ENCODE measurements at regions of chr1 and their contacts with region 1.

Region 1: GRCh38 chr1:62746085-62746808 is 37.7 kb upstream of the ATG4C start:
- DNase-seq: no peak
- H3K4me3 Mint-ChIP-seq: no peak overlapping the region
- H3K27ac Mint-ChIP-seq: no peak overlapping the region
- H3K4me1 Mint-ChIP-seq: no peaks in the 10 kb centered on the region
- H3K27me3 Mint-ChIP-seq: peaks cover 22% of the 10 kb centered on the region

Region 2: GRCh38 chr1:62175568-62176179 is 570.6 kb before region 1 on chr1:
- CTCF ChIA-PET with region 1: interaction called, 13 read pairs
- POLR2A ChIA-PET with region 1: no interaction called
- DNase-seq: peak; percentile 28
- H3K4me3 Mint-ChIP-seq: no peak overlapping the region
- H3K27ac Mint-ChIP-seq: no peak overlapping the region
- H3K4me1 Mint-ChIP-seq: no peaks in the 10 kb centered on the region
- H3K27me3 Mint-ChIP-seq: peaks cover 3% of the 10 kb centered on the region

Region 3: DNA sequence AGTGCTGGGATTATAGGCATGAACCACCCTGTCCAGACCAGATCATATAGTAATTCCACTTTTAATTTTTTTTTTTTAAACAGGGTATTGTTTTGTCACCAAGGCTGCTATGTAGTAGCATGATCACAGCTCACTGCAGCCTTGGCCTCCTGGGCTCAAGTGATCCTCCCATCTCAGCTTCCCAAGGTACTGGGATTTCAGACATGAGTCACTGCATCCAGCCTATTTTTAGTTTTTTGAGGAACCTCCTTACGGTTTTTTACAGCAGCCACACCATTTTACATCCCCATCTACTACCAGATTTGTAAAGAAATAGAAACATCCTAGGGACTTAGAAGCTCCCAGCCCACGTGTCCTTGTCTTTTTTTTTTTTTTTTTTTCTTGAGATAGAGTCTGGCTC is 527.6 kb before region 1 on chr1:
- CTCF ChIA-PET with region 1: no interaction called
- POLR2A ChIA-PET with region 1: no interaction called
- DNase-seq: no peak
- H3K4me3 Mint-ChIP-seq: no peak overlapping the region
- H3K27ac Mint-ChIP-seq: no peak overlapping the region
- H3K4me1 Mint-ChIP-seq: no peaks in the 10 kb centered on the region
- H3K27me3 Mint-ChIP-seq: no peaks in the 10 kb centered on the region

Region 4: GRCh38 chr1:62508187-62508758 is 238.0 kb before region 1 on chr1:
- CTCF ChIA-PET with region 1: interaction called, 41 read pairs
- POLR2A ChIA-PET with region 1: no interaction called
- DNase-seq: no peak
- H3K4me3 Mint-ChIP-seq: no peak overlapping the region
- H3K27ac Mint-ChIP-seq: no peak overlapping the region
- H3K4me1 Mint-ChIP-seq: no peaks in the 10 kb centered on the region
- H3K27me3 Mint-ChIP-seq: no peaks in the 10 kb centered on the region

Region 5: GRCh38 chr1:62814786-62815185 is 68.5 kb after region 1 on chr1:
- CTCF ChIA-PET with region 1: no interaction called
- POLR2A ChIA-PET with region 1: no interaction called
- DNase-seq: no peak
- H3K4me3 Mint-ChIP-seq: no peak overlapping the region
- H3K27ac Mint-ChIP-seq: no peak overlapping the region
- H3K4me1 Mint-ChIP-seq: peaks cover 2% of the 10 kb centered on the region
- H3K27me3 Mint-ChIP-seq: no peaks in the 10 kb centered on the region

Measured in activated CD4-positive, alpha-beta memory T cell treated with anti-CD3 and anti-CD28 coated beads, Interleukin-2, amount 10 ng/mL, durations not matched to agents 7 days and 5 days (primary cell).